Panc1 (cell line): ENCODE measurements at regions of chr1 and their contacts with region 1.

Region 1: DNA sequence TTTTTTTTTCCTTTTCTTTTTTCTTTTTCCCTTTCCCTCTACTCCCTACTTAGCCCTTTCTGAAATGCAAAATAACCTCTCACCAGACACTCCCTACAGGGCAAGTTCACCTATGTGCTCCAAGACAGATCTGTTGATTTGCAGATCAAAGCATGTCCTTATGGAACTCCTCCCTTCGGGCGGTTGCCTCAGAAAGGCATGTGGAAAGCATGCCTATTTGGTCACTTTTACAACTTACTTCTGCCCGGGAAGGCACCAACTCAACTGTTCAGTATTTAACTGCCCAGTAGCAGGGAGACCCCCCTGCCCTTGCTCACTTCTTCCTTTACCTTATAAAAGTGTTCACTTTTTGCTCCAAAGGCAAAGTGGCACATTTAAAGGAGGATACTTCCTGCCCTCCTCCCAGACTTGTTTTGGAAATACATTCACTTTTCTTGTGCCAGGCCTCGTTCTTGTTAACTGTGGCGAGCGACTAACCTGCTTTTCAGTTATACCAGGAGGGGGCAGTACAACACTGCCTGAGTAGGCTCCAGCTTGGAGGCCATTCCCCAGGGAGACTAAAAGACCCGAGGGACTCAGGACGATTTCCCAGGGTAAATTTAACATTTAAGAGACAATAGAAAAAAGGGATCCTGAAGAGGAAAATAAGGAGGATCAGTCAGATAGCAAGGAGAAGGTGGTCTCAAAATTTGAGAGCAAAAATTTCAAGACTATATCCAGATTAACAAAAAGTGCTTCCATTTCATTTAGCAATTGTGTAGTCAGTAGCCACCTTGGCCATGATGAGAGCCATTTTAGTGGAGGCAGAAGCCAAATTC is 12.3 kb upstream of the SLAMF7 start:
- DNase-seq: peak; percentile 30
- ATAC-seq: peak; percentile 88
- H3K4me3 ChIP-seq: no peak overlapping the region
- H3K27ac ChIP-seq: no peak overlapping the region
- H3K4me1 ChIP-seq: peaks cover 4% of the 10 kb centered on the region; the same call in 1 of the 2 replicates
- H3K27me3 ChIP-seq: peaks cover 14% of the 10 kb centered on the region
- CTCF ChIP-seq: peak; percentile 89

Region 2: GRCh38 chr1:160818207-160818937 is 91.7 kb after region 1 on chr1:
- CTCF ChIA-PET with region 1: no interaction called
- POLR2A ChIA-PET with region 1: no interaction called
- in situ Hi-C with region 1: no loop called
- intact Hi-C with region 1: no loop called
- DNase-seq: no peak
- ATAC-seq: no peak
- H3K4me3 ChIP-seq: no peak overlapping the region
- H3K27ac ChIP-seq: no peak overlapping the region
- H3K4me1 ChIP-seq: no peaks in the 10 kb centered on the region
- H3K27me3 ChIP-seq: peaks cover 4% of the 10 kb centered on the region; the same call in 1 of the 2 replicates
- CTCF ChIP-seq: no peak

Region 3: GRCh38 chr1:160830321-160831153 is 103.8 kb after region 1 on chr1:
- CTCF ChIA-PET with region 1: no interaction called
- POLR2A ChIA-PET with region 1: no interaction called
- in situ Hi-C with region 1: no loop called
- intact Hi-C with region 1: loop called (anchors 2 kb)
- DNase-seq: peak; percentile 30
- ATAC-seq: peak; percentile 85
- H3K4me3 ChIP-seq: no peak overlapping the region
- H3K27ac ChIP-seq: no peak overlapping the region
- H3K4me1 ChIP-seq: no peaks in the 10 kb centered on the region
- H3K27me3 ChIP-seq: 0 out of 2 replicates have a peak, but pooled peaks cover 3% of the 10 kb centered on the region
- CTCF ChIP-seq: peak; percentile 79